Transverse colon (tissue), 4 donors: ENCODE measurements at regions of chr5 and their contacts with region 1.

Region 1: GRCh38 chr5:104178829-104179456 is 616.4 kb upstream of the NUDT12 start:
- DNase-seq: peak; percentile 34
- H3K4me3 ChIP-seq: no peak overlapping the region
- H3K27ac ChIP-seq: no peak overlapping the region
- H3K4me1 ChIP-seq: no peaks in the 10 kb centered on the region
- H3K27me3 ChIP-seq: no peaks in the 10 kb centered on the region
- CTCF ChIP-seq: peak; percentile 24 to 58 (median 43)
- EP300 ChIP-seq: no peak
- POLR2A ChIP-seq: no peak

Region 2: GRCh38 chr5:103582364-103582763 is 596.6 kb before region 1 on chr5:
- in situ Hi-C with region 1: loop called in 1 of 4 experiments (anchors 25 kb)
- intact Hi-C with region 1: no loop called
- DNase-seq: peak; percentile 20
- H3K4me3 ChIP-seq: no peak overlapping the region
- H3K27ac ChIP-seq: no peak overlapping the region
- H3K4me1 ChIP-seq: no peaks in the 10 kb centered on the region
- H3K27me3 ChIP-seq: no peaks in the 10 kb centered on the region
- CTCF ChIP-seq: peak; percentile 39 to 45 (median 41)
- EP300 ChIP-seq: no peak
- POLR2A ChIP-seq: no peak

Region 3: DNA sequence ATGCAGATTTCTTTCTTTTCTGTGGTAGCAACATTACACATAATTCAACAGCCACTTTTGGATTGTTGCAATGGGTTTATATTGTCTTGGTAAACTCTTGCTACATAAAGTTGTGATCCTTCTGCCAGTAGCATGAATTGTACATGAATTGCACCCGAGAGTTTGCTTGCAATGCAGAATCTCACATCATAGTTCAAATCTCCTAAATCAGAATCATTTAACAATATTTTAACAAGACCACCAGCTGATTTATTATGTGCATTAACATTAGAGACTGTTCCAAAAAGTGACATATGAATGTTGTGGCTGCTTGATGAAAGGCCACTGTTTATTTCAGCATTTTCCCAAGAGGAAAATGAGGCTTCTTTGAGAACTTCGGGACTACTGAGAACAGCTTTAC is 875.5 kb after region 1 on chr5:
- in situ Hi-C with region 1: no loop called
- intact Hi-C with region 1: no loop called
- DNase-seq: no peak
- H3K4me3 ChIP-seq: no peak overlapping the region
- H3K27ac ChIP-seq: no peak overlapping the region
- H3K4me1 ChIP-seq: no peaks in the 10 kb centered on the region
- H3K27me3 ChIP-seq: no peaks in the 10 kb centered on the region
- CTCF ChIP-seq: no peak
- EP300 ChIP-seq: no peak
- POLR2A ChIP-seq: no peak